ENCODE measurements at regions of chr13 and their contacts with region 1.

Region 1: DNA sequence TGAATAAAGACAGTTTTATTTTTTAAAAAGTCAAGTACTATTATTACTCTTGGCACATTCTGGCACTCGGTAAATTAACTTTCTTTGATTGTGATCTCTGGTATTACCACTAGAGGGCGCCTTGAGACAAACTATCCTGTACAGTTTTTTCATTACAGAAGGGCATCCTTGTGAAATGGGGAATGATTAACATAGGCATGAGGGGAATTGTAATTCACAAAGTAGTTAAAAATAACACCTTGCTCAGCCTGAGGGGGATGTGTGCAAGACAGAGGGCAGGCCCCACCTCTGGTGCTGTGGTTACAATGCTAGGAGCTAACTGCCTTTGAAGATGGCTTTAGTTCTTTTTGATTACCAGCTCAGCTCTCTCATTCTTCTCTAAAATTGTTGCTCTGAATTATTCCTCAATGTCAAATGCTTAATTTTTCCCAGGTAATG is 24.2 kb upstream of the C1QTNF9B start:
- DNase-seq: no peak
- H3K4me3 Mint-ChIP-seq: no peak overlapping the region
- H3K27ac Mint-ChIP-seq: no peak overlapping the region
- H3K4me1 Mint-ChIP-seq: no peaks in the 10 kb centered on the region
- H3K27me3 Mint-ChIP-seq: peaks cover 20% of the 10 kb centered on the region

Region 2: GRCh38 chr13:23960566-23961156 is 39.2 kb after region 1 on chr13:
- CTCF ChIA-PET with region 1: interaction called, 34 read pairs
- POLR2A ChIA-PET with region 1: no interaction called
- intact Hi-C with region 1: loop called (anchors 1 kb)
- DNase-seq: no peak
- H3K4me3 Mint-ChIP-seq: no peak overlapping the region
- H3K27ac Mint-ChIP-seq: no peak overlapping the region
- H3K4me1 Mint-ChIP-seq: peaks cover 25% of the 10 kb centered on the region
- H3K27me3 Mint-ChIP-seq: peaks cover 2% of the 10 kb centered on the region

Region 3: DNA sequence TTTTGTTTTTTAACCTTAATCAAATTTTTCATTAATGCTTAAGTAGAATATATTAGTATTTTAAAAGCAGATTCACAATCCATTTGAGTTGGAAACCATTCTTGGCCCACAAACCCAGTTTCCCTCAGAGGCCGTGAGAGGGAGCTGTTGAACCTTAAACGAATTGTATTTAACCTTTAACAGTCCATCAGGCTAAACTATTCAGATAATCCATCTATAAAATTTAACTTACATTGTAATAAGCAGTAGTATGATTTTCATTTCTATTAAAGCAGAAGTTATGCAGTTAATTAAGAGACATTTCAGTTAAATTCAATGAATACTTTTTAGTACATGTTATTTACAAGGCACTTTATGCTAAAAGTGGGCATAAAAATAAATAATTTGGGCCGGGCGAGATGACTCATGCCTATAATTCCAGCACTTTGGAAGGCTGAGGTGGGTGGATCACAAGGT is 98.9 kb after region 1 on chr13:
- CTCF ChIA-PET with region 1: interaction called, 4 read pairs
- POLR2A ChIA-PET with region 1: no interaction called
- intact Hi-C with region 1: loop called (anchors 10 kb)
- DNase-seq: peak; percentile 51
- H3K4me3 Mint-ChIP-seq: no peak overlapping the region
- H3K27ac Mint-ChIP-seq: no peak overlapping the region
- H3K4me1 Mint-ChIP-seq: peaks cover 3% of the 10 kb centered on the region
- H3K27me3 Mint-ChIP-seq: no peaks in the 10 kb centered on the region